WTC11 (cell line): ENCODE measurements at regions of chr17 and their contacts with region 1.

Region 1: DNA sequence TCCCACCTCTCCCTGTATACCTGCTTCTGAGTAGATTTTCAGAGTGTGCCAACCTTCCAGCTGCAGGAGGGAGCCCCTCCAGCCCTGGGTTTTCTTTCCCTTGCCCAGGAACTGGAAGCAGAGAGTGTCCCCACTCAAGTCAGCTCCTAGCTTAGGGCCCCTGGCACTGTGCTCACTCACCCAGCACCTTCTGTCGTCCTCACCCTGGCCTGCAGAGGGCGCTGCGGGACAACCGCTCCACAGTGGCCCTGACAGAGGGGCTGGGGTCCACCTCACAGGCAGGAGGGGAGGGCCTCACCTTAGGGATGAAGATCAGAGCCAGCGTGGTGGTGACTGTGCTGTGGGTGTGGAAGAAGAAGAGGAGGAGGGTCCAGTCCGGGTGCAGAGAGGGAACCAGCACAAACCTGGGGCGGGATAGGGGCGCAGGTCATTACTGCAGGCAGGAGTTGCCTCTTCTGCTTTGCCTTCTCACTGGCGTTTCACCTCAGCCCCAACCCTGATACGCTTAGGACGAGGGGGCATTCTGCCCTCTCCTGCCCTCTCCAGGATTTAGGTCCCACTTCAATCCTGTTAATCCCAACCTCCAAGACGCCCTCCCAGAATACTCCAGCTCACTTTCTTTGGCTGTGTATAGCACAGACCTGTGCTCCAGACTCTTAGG is 10.0 kb downstream of the GPR179 start:
- DNase-seq: peak; percentile 96
- ATAC-seq: peak; percentile 92
- H3K4me3 Mint-ChIP-seq: no peak overlapping the region
- H3K27ac Mint-ChIP-seq: no peak overlapping the region; the same call in 1 of the 2 replicates
- H3K4me1 Mint-ChIP-seq: peaks cover 16% of the 10 kb centered on the region
- H3K27me3 Mint-ChIP-seq: no peaks in the 10 kb centered on the region; the same call in 1 of the 2 replicates
- CTCF ChIP-seq: peak; percentile 95

Region 2: GRCh38 chr17:38322091-38322779 is 11.5 kb before region 1 on chr17:
- CTCF ChIA-PET with region 1: interaction called, 165 read pairs
- POLR2A ChIA-PET with region 1: interaction called, 5 read pairs
- DNase-seq: peak; percentile 83
- ATAC-seq: peak; percentile 78
- H3K4me3 Mint-ChIP-seq: no peak overlapping the region
- H3K27ac Mint-ChIP-seq: no peak overlapping the region; the same call in 1 of the 2 replicates
- H3K4me1 Mint-ChIP-seq: peaks cover 22% of the 10 kb centered on the region
- H3K27me3 Mint-ChIP-seq: no peaks in the 10 kb centered on the region
- CTCF ChIP-seq: peak; percentile 90

Region 3: GRCh38 chr17:38358586-38359513 is 25.1 kb after region 1 on chr17:
- CTCF ChIA-PET with region 1: interaction called, 50 read pairs
- POLR2A ChIA-PET with region 1: no interaction called
- DNase-seq: no peak
- ATAC-seq: no peak
- H3K4me3 Mint-ChIP-seq: no peak overlapping the region
- H3K27ac Mint-ChIP-seq: peak overlapping the region; percentile 46; the same call in 1 of the 2 replicates
- H3K4me1 Mint-ChIP-seq: peaks cover 61% of the 10 kb centered on the region
- H3K27me3 Mint-ChIP-seq: no peaks in the 10 kb centered on the region
- CTCF ChIP-seq: no peak

Region 4: DNA sequence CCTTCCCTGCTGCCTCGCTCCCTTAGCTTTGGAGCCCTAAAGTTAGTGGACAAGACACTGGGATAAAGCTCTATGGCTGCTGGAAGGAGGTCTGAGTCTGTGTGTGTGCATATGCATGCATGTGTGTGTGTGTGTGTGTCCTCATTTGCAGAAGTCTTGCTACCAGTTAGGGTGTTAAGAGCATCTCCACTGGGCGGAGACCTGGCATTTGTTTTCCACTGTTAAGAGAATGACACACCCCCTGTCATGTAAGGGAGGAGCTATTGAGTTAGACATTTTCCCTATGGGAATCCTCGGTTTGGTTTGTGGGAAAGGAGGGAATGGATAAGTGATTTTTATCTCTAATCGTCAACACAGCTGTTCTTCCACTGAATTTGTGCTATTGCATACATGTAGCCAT is 69.7 kb after region 1 on chr17:
- CTCF ChIA-PET with region 1: interaction called, 28 read pairs
- POLR2A ChIA-PET with region 1: no interaction called
- DNase-seq: no peak
- ATAC-seq: peak; percentile 62
- H3K4me3 Mint-ChIP-seq: peak overlapping the region; percentile 45
- H3K27ac Mint-ChIP-seq: peak overlapping the region; percentile 70; the same call in 1 of the 2 replicates
- H3K4me1 Mint-ChIP-seq: peaks cover 37% of the 10 kb centered on the region
- H3K27me3 Mint-ChIP-seq: no peaks in the 10 kb centered on the region
- CTCF ChIP-seq: no peak

Region 5: GRCh38 chr17:38415250-38416194 is 81.8 kb after region 1 on chr17:
- CTCF ChIA-PET with region 1: interaction called, 126 read pairs
- POLR2A ChIA-PET with region 1: interaction called, 19 read pairs
- DNase-seq: peak; percentile 69
- ATAC-seq: peak; percentile 43
- H3K4me3 Mint-ChIP-seq: peak overlapping the region; percentile 61
- H3K27ac Mint-ChIP-seq: peak overlapping the region; percentile 91
- H3K4me1 Mint-ChIP-seq: peaks cover 59% of the 10 kb centered on the region
- H3K27me3 Mint-ChIP-seq: peaks cover 29% of the 10 kb centered on the region
- CTCF ChIP-seq: no peak

Region 6: DNA sequence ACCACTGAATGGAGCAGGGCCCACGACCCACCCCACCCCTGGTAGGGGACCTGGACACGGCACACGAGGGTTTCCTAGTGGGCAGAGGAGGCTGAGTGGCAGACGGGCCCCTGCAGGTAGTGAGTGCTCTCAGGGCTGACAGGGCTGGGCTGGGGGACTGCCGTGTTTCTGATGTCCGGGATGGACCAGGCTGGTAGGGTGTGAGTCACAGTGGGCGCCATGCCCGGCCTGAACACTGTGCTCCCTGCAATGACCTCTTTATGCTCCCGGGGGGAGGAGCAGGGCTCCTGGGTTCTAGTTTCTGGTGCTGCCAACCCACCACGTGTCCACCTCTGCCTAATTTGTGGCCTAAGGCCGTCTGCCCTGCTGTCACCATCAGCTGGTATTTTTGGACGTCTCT is 120.8 kb after region 1 on chr17:
- CTCF ChIA-PET with region 1: interaction called, 13 read pairs
- POLR2A ChIA-PET with region 1: interaction called, 3 read pairs
- DNase-seq: no peak
- ATAC-seq: no peak
- H3K4me3 Mint-ChIP-seq: peak overlapping the region; percentile 62
- H3K27ac Mint-ChIP-seq: peak overlapping the region; percentile 84
- H3K4me1 Mint-ChIP-seq: peaks cover 65% of the 10 kb centered on the region
- H3K27me3 Mint-ChIP-seq: 0 out of 2 replicates have a peak, but pooled peaks cover 2% of the 10 kb centered on the region
- CTCF ChIP-seq: no peak